Activated naive CD4-positive, alpha-beta T cell treated with anti-CD3 and anti-CD28 coated beads for 36 hours (primary cell): ENCODE measurements at regions of chr4 and their contacts with region 1.

Region 1: DNA sequence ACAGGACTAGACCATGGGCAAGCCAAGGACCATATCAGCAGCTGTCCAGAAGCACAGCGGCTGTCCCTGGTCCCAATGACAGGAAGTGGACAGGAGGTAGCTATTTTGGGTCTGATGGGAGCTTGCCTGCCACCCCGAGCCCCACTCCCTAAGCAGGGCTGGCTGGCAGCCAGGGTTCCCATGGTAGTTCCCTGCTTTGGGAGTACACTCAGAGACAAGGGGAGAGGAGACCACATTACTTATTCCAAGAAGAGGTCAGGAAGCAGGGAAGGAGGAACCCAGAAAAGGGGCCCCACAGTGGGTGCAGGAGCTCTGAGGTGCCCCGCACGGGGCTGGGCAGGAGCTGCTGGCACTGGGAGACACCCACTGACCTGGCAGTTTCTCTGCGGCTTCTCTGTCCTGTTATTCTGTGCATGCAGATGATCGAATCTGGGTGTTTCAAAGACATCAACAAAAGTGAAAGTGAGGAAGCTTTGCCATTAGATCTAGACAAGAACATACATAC is 36.3 kb downstream of the HTT-AS start:
- DNase-seq: peak; percentile 45
- H3K4me3 Mint-ChIP-seq: peak overlapping the region; percentile 69
- H3K27ac Mint-ChIP-seq: no peak overlapping the region
- H3K4me1 Mint-ChIP-seq: peaks cover 37% of the 10 kb centered on the region
- H3K27me3 Mint-ChIP-seq: no peaks in the 10 kb centered on the region

Region 2: GRCh38 chr4:3009422-3009821 is 28.6 kb before region 1 on chr4:
- CTCF ChIA-PET with region 1: interaction called, 17 read pairs
- intact Hi-C with region 1: loop called (anchors 1 kb)
- DNase-seq: peak; percentile 49
- H3K4me3 Mint-ChIP-seq: no peak overlapping the region
- H3K27ac Mint-ChIP-seq: no peak overlapping the region
- H3K4me1 Mint-ChIP-seq: peaks cover 17% of the 10 kb centered on the region
- H3K27me3 Mint-ChIP-seq: peaks cover 2% of the 10 kb centered on the region